HCT116 (cell line): ENCODE measurements at regions of chr4 and their contacts with region 1.

Region 1: GRCh38 chr4:55345980-55346850 is at the start of gene SRD5A3:
- DNase-seq: peak; percentile 63
- ATAC-seq: peak; percentile 90
- H3K4me3 ChIP-seq: peak within 1 kb of the TSS; percentile 57 to 68
- H3K27ac ChIP-seq: peak within 1 kb of the TSS; percentile 91
- H3K4me1 ChIP-seq: peaks cover 26 to 38% of the 10 kb centered on the region in 2 experiments
- H3K27me3 ChIP-seq: no peaks in the 10 kb centered on the region
- CTCF ChIP-seq: peak; percentile 43 to 75 (median 70)
- POLR2A ChIP-seq: peak; percentile 86
- RAD21 ChIP-seq: peak; percentile 68
- total RNA-seq, gene SRD5A3: 19.9 TPM

Region 2: DNA sequence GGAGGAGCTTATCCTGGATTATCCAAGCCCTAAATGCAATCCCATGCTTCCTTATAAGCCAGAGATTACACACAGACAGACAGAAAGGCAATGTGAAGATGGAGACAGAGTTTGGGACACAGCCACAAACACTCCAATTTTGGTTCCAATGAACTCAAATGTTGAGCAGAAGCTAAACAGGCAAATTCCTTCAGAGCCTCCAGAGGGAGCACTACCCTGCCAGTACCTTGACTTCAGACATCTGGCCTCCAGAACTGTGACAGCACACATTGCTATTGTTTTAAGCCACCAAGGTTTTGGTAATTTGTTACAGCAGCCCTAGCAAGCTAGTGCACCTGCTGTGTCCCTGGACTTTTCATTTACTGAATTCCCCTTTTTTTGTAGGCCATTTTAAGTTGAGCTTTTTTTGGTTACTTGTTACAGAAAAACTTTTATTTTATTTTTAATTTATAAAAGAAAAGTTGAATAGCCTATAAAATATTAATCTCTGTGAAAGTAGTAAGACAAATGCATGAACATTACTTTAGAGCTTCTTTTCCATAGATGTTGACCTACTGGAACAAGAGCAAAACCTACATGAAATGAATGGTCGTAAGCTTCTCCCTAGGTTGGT is 33.6 kb before region 1 on chr4:
- CTCF ChIA-PET with region 1: no interaction called
- POLR2A ChIA-PET with region 1: no interaction called
- RAD21 ChIA-PET with region 1: no interaction called
- intact Hi-C with region 1: no loop called
- DNase-seq: peak; percentile 46
- ATAC-seq: peak; percentile 88
- H3K4me3 ChIP-seq: no peak overlapping the region
- H3K27ac ChIP-seq: no peak overlapping the region
- H3K4me1 ChIP-seq: no peaks in the 10 kb centered on the region
- H3K27me3 ChIP-seq: no peaks in the 10 kb centered on the region
- CTCF ChIP-seq: peak; percentile 40 to 88 (median 83); a peak in 5 of 6 replicates
- POLR2A ChIP-seq: no peak
- RAD21 ChIP-seq: peak; percentile 56

Region 3: DNA sequence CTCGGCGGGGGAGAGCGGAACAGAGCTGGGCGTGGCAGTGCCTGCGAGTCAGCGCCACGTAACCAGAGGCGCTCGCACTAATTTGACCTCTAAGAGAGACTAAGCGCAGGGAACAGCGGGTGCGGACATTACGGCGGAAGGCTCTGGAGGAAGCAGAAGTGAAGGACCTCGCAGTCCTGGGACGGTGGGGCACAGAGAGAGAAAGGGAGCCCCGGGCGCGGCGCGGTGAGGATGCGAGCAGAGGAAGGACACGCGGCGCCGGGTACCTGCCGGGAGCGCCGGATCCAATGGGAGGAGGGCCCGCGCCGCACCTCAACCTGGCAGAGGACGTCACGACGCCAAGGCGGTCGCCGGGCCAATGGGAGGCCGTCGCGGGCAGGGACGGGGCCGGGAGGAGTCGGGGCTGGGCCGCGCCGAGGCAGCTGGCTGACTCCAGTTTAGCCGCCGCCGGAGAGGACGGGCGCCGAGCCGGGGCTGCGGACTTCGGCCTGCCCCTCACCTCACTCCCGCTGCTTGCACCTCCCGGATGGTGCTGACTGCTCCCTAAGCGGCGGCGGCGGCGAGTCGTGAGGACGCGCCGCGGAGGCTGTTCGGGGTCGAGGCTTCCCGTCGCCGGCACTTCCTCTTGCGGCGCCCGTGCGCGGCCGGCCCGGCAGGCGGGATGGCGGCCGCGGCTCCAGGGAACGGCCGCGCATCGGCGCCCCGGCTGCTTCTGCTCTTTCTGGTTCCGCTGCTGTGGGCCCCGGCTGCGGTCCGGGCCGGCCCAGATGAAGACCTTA is 49.5 kb after region 1 on chr4 and contains the start of gene TMEM165:
- CTCF ChIA-PET with region 1: no interaction called
- POLR2A ChIA-PET with region 1: interaction called, 6 read pairs
- RAD21 ChIA-PET with region 1: interaction called in 1 of 2 experiments, 3 read pairs
- intact Hi-C with region 1: loop called (anchors 1 kb)
- DNase-seq: peak; percentile 77
- ATAC-seq: peak; percentile 97
- H3K4me3 ChIP-seq: peak within 1 kb of the TSS; percentile 80 to 92
- H3K27ac ChIP-seq: peak within 1 kb of the TSS; percentile 90
- H3K4me1 ChIP-seq: peaks cover 18 to 29% of the 10 kb centered on the region in 2 experiments
- H3K27me3 ChIP-seq: no peaks in the 10 kb centered on the region
- CTCF ChIP-seq: no peak
- POLR2A ChIP-seq: peak; percentile 76
- RAD21 ChIP-seq: no peak
- total RNA-seq, gene TMEM165: 60.7 TPM

Region 4: GRCh38 chr4:55546756-55547465 is 200.7 kb after region 1 on chr4 and contains the start of gene CLOCK:
- CTCF ChIA-PET with region 1: interaction called, 5 read pairs
- POLR2A ChIA-PET with region 1: no interaction called
- RAD21 ChIA-PET with region 1: no interaction called
- intact Hi-C with region 1: loop called (anchors 5 kb)
- DNase-seq: peak; percentile 68
- ATAC-seq: peak; percentile 60
- H3K4me3 ChIP-seq: peak within 1 kb of the TSS; percentile 73 to 80
- H3K27ac ChIP-seq: peak within 1 kb of the TSS; percentile 100
- H3K4me1 ChIP-seq: peaks cover 57 to 68% of the 10 kb centered on the region in 2 experiments
- H3K27me3 ChIP-seq: no peaks in the 10 kb centered on the region
- CTCF ChIP-seq: peak in 2 of 3 experiments; percentile 35 to 49; a peak in 4 of 6 replicates
- POLR2A ChIP-seq: peak; percentile 47
- RAD21 ChIP-seq: no peak; the same call in 1 of the 2 replicates
- total RNA-seq, gene CLOCK: 38.7 TPM

Region 5: DNA sequence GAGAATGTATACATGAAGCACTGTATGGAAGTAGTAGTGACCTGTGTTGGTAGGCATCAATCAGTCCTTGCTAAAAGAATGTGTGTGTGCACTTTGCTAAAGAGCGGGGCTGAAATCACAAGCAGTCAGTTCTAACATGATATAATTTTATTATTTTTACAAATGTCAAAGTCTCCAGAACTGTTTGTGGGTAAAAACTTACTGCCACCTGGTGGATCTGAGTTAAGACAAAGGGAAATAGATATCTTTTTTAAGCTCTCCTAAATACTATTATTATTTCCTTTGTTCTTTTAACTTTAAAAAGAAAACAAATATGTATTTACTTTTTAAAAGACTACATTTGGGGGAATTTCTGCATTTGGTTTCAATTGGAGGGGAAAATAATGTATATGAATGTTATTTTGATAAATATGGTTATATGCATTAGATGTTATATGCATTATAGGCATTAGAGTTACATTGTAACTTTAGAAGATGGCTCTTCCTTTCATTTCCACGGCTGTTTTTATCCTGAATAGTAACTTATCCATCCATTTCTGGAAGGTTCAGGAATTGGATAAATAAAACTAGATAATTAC is 208.3 kb after region 1 on chr4:
- CTCF ChIA-PET with region 1: interaction called, 10 read pairs
- POLR2A ChIA-PET with region 1: no interaction called
- RAD21 ChIA-PET with region 1: no interaction called
- intact Hi-C with region 1: loop called (anchors 5 kb)
- DNase-seq: peak; percentile 36
- ATAC-seq: no peak
- H3K4me3 ChIP-seq: no peak overlapping the region
- H3K27ac ChIP-seq: no peak overlapping the region
- H3K4me1 ChIP-seq: peaks cover 20 to 35% of the 10 kb centered on the region in 2 experiments
- H3K27me3 ChIP-seq: no peaks in the 10 kb centered on the region
- CTCF ChIP-seq: peak; percentile 42 to 81 (median 48)
- POLR2A ChIP-seq: no peak
- RAD21 ChIP-seq: peak; percentile 82

Region 6: DNA sequence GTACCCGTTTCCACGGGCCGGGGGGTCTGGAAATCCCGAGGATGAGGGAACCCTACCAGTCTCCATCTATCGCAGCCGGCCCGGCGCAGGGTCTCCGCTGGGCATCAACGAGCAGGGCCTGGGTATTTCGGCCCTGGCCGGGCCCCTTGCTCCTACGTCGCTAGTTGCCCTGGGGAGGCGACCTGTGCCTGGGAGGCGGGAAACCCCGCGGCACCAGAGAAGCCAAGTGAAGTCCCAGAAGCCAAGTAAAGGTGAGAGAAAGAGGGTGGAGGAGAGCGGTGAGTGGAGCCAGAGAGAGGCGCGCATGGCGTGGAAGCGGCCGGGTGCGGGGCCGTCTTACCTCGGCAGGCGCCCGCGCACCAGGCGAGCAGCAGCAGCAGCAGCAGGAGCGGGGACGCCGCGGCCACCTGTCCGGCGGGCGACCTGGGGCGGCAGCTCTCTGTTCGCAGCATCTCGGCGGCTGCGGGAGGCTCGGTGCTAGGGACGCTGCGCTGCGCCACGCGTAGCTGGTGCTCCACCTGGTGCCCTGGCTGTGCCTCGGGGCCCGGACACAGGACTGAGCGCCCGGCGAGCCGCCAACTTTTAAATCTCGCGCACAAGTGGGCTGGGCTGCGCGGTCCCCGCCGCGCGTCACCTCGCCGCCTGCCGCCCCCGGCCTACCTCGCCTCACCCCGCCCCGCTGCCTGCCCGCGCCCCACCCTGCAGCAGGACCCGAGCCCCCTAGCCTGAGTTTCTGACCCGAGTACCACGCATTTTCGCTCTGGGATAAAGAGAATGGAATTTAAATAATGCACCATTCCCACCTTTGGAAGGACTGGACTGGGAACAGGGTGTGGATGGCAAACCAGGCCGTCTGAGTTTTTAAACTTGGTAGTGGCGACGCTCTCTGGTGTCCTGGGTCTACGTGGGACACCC is 289.8 kb after region 1 on chr4 and contains the start of gene NMU:
- CTCF ChIA-PET with region 1: no interaction called
- POLR2A ChIA-PET with region 1: no interaction called
- RAD21 ChIA-PET with region 1: no interaction called
- intact Hi-C with region 1: loop called (anchors 10 kb)
- DNase-seq: peak; percentile 67
- ATAC-seq: peak; percentile 93
- H3K4me3 ChIP-seq: peak within 1 kb of the TSS; percentile 77 to 78
- H3K27ac ChIP-seq: peak within 1 kb of the TSS; percentile 58
- H3K4me1 ChIP-seq: peaks cover 22 to 34% of the 10 kb centered on the region in 2 experiments
- H3K27me3 ChIP-seq: no peaks in the 10 kb centered on the region
- CTCF ChIP-seq: 0 out of 6 replicates have a peak, but pooled peaks of 1 of the 3 experiments have one; percentile 6
- POLR2A ChIP-seq: peak; percentile 73
- RAD21 ChIP-seq: peak; percentile 64
- total RNA-seq, gene NMU: 81.1 TPM

Region 7: DNA sequence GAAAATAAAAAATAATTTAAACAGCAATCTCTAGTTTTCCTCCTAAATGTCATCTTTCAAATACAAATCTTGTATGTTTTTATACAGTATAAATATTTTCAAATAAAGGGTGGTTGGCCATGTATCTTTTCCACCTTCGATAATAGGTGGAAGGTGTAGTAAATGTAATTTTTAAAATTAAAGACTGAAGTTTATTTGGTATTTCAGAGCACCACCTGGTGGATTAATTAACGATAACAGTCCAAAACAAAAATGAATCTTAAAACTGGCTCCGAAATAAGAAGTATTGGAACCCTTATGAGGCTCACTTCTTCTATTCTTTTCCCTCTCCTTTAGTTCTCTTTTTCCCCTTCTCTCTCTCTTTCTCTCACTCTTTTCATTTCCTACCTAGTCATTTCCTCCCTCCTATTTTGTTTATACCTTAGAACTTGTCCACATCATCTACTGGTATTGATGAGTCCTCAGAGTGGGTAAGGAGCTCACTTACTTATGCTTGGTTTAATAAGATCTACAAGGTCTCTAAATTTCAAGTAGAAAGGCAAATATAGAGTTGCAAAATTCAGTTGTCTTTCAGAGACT is 390.5 kb after region 1 on chr4:
- CTCF ChIA-PET with region 1: interaction called, 4 read pairs
- POLR2A ChIA-PET with region 1: no interaction called
- RAD21 ChIA-PET with region 1: no interaction called
- intact Hi-C with region 1: loop called (anchors 1 kb)
- DNase-seq: peak; percentile 23
- ATAC-seq: no peak
- H3K4me3 ChIP-seq: no peak overlapping the region
- H3K27ac ChIP-seq: no peak overlapping the region
- H3K4me1 ChIP-seq: peaks cover 5 to 18% of the 10 kb centered on the region in 2 experiments
- H3K27me3 ChIP-seq: no peaks in the 10 kb centered on the region
- CTCF ChIP-seq: peak; percentile 23 to 58 (median 54); a peak in 4 of 6 replicates
- POLR2A ChIP-seq: no peak
- RAD21 ChIP-seq: peak; percentile 79

Region 8: GRCh38 chr4:55866973-55867574 is 520.9 kb after region 1 on chr4:
- CTCF ChIA-PET with region 1: no interaction called
- POLR2A ChIA-PET with region 1: no interaction called
- RAD21 ChIA-PET with region 1: no interaction called
- intact Hi-C with region 1: loop called (anchors 10 kb)
- DNase-seq: peak; percentile 51
- ATAC-seq: peak; percentile 87
- H3K4me3 ChIP-seq: no peak overlapping the region
- H3K27ac ChIP-seq: peak overlapping the region; percentile 49; the same call in 1 of the 2 replicates
- H3K4me1 ChIP-seq: peaks cover 12 to 26% of the 10 kb centered on the region in 2 experiments
- H3K27me3 ChIP-seq: no peaks in the 10 kb centered on the region
- CTCF ChIP-seq: peak; percentile 33 to 79 (median 78); a peak in 5 of 6 replicates
- POLR2A ChIP-seq: no peak
- RAD21 ChIP-seq: peak; percentile 76